HEK293T (cell line): ENCODE measurements at regions of chr15 and their contacts with region 1.

Region 1: GRCh38 chr15:90071208-90071807 is 31.0 kb downstream of the IDH2 start:
- DNase-seq: peak; percentile 78

Region 2: GRCh38 chr15:89971592-89971997 is 99.7 kb before region 1 on chr15:
- CTCF ChIA-PET with region 1: interaction called, 10 read pairs
- POLR2A ChIA-PET with region 1: no interaction called
- DNase-seq: peak; percentile 89